ENCODE measurements at regions of chr14 and their contacts with region 1.

Region 1: GRCh38 chr14:45253068-45253753 is at the start of gene MIS18BP1:
- DNase-seq: peak; percentile 98
- H3K4me3 ChIP-seq: peak within 1 kb of the TSS; percentile 79 to 96 (median 88)
- H3K27ac ChIP-seq: peak within 1 kb of the TSS; percentile 89
- H3K4me1 ChIP-seq: peaks cover 15% of the 10 kb centered on the region
- H3K27me3 ChIP-seq: no peaks in the 10 kb centered on the region
- CTCF ChIP-seq: peak; percentile 83 to 91
- POLR2A ChIP-seq: peak; percentile 79
- total RNA-seq, gene MIS18BP1: 41.1 and 43.3 TPM in 2 replicates

Region 2: GRCh38 chr14:44564929-44565328 is 688.3 kb before region 1 on chr14:
- CTCF ChIA-PET with region 1: no interaction called
- POLR2A ChIA-PET with region 1: no interaction called
- dilution Hi-C with region 1: no loop called
- intact Hi-C with region 1: no loop called
- DNase-seq: no peak
- H3K4me3 ChIP-seq: no peak overlapping the region
- H3K27ac ChIP-seq: no peak overlapping the region
- H3K4me1 ChIP-seq: no peaks in the 10 kb centered on the region
- H3K27me3 ChIP-seq: no peaks in the 10 kb centered on the region
- CTCF ChIP-seq: no peak
- POLR2A ChIP-seq: no peak

Region 3: GRCh38 chr14:44897045-44897844 is 356.0 kb before region 1 on chr14:
- CTCF ChIA-PET with region 1: no interaction called
- POLR2A ChIA-PET with region 1: interaction called, 5 read pairs
- dilution Hi-C with region 1: no loop called
- intact Hi-C with region 1: loop called (anchors 1 kb)
- DNase-seq: peak; percentile 97
- H3K4me3 ChIP-seq: peak overlapping the region; percentile 64 to 76 (median 75)
- H3K27ac ChIP-seq: peak overlapping the region; percentile 68
- H3K4me1 ChIP-seq: peaks cover 12% of the 10 kb centered on the region
- H3K27me3 ChIP-seq: no peaks in the 10 kb centered on the region
- CTCF ChIP-seq: no peak
- POLR2A ChIP-seq: peak; percentile 65

Region 4: GRCh38 chr14:44961604-44962333 is 291.4 kb before region 1 on chr14 and contains the starts of genes KLHL28 and TOGARAM1:
- CTCF ChIA-PET with region 1: interaction called, 5 read pairs
- POLR2A ChIA-PET with region 1: interaction called, 3 read pairs
- dilution Hi-C with region 1: no loop called
- intact Hi-C with region 1: loop called (anchors 1 kb)
- DNase-seq: peak; percentile 100
- H3K4me3 ChIP-seq: peak within 1 kb of the TSS; percentile 71 to 83 (median 72)
- H3K27ac ChIP-seq: peak within 1 kb of the TSS; percentile 60
- H3K4me1 ChIP-seq: peaks cover 35% of the 10 kb centered on the region
- H3K27me3 ChIP-seq: no peaks in the 10 kb centered on the region
- CTCF ChIP-seq: no peak
- POLR2A ChIP-seq: peak; percentile 95
- total RNA-seq, gene KLHL28: 7.3 and 8.4 TPM in 2 replicates
- total RNA-seq, gene TOGARAM1: 13.3 and 13.8 TPM in 2 replicates

Region 5: GRCh38 chr14:45134051-45134958 is 118.9 kb before region 1 on chr14 and contains the start of gene FKBP3:
- CTCF ChIA-PET with region 1: interaction called, 31 read pairs
- POLR2A ChIA-PET with region 1: no interaction called
- dilution Hi-C with region 1: no loop called
- intact Hi-C with region 1: loop called (anchors 1 kb)
- DNase-seq: peak; percentile 97
- H3K4me3 ChIP-seq: peak within 1 kb of the TSS; percentile 78 to 90 (median 84)
- H3K27ac ChIP-seq: peak within 1 kb of the TSS; percentile 61
- H3K4me1 ChIP-seq: peaks cover 20% of the 10 kb centered on the region
- H3K27me3 ChIP-seq: no peaks in the 10 kb centered on the region
- CTCF ChIP-seq: peak in 1 of 2 donors; percentile 10
- POLR2A ChIP-seq: peak; percentile 88
- total RNA-seq, gene FKBP3: 88.2 and 92.9 TPM in 2 replicates

Region 6: DNA sequence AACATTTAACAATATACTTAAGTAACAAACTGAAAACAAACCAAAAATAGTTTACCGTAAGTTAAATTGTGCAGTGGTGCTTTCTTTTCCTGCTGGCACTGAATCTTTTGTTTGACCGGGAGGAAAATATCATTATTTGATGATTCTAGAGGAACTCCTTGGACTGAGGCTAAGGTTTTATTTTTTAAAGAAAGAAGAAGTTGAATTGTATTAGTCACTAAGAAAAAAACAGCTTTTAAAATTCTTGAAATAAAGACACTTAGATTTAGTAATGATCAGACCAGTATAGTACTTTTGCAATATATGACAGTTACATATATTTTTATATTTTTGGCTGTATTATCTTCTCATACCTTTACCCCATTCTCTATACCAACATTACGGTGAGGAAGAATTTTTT is 10.5 kb before region 1 on chr14:
- CTCF ChIA-PET with region 1: interaction called, 15 read pairs
- POLR2A ChIA-PET with region 1: no interaction called
- dilution Hi-C with region 1: no loop called
- intact Hi-C with region 1: no loop called
- DNase-seq: peak; percentile 20
- H3K4me3 ChIP-seq: no peak overlapping the region
- H3K27ac ChIP-seq: peak overlapping the region; percentile 32
- H3K4me1 ChIP-seq: peaks cover 5% of the 10 kb centered on the region
- H3K27me3 ChIP-seq: no peaks in the 10 kb centered on the region
- CTCF ChIP-seq: no peak
- POLR2A ChIP-seq: no peak

Region 7: GRCh38 chr14:45308745-45309397 is 55.7 kb after region 1 on chr14:
- CTCF ChIA-PET with region 1: no interaction called
- POLR2A ChIA-PET with region 1: no interaction called
- dilution Hi-C with region 1: no loop called
- intact Hi-C with region 1: no loop called
- DNase-seq: no peak
- H3K4me3 ChIP-seq: no peak overlapping the region
- H3K27ac ChIP-seq: no peak overlapping the region
- H3K4me1 ChIP-seq: no peaks in the 10 kb centered on the region
- H3K27me3 ChIP-seq: no peaks in the 10 kb centered on the region
- CTCF ChIP-seq: no peak
- POLR2A ChIP-seq: no peak